ENCODE measurements at regions of chr11 and their contacts with region 1.

Region 1: GRCh38 chr11:82959987-82960778 is 58.6 kb downstream of the DDIAS start:
- DNase-seq: no peak
- H3K4me3 ChIP-seq: no peak overlapping the region
- H3K4me3 Mint-ChIP-seq: no peak overlapping the region
- H3K27ac Mint-ChIP-seq: no peak overlapping the region
- H3K4me1 ChIP-seq: peaks cover 4% of the 10 kb centered on the region; the same call in 1 of the 2 replicates
- H3K4me1 Mint-ChIP-seq: no peaks in the 10 kb centered on the region
- H3K27me3 ChIP-seq: no peaks in the 10 kb centered on the region
- H3K27me3 Mint-ChIP-seq: no peaks in the 10 kb centered on the region
- CTCF ChIP-seq: no peak

Region 2: DNA sequence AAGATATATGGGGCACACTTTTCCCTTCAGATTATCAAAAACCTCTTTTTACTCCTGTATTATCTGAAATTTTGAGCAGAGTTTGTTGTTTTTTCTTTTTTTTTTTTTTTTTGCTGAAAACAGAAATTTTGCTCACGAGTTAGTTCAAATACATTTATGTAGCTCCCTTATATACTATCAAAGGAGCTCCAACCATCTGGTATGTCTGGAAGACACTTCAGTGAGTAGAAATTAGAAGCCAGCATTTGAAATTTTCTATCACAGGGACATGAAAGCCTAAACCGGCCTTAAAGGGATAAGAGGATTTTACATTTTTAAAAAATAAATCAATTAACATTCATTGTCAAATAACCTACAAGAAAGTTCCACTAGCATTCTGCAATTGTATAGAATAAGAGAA is 14.7 kb after region 1 on chr11:
- CTCF ChIA-PET with region 1: no interaction called
- POLR2A ChIA-PET with region 1: interaction called, 10 read pairs
- intact Hi-C with region 1: no loop called
- DNase-seq: no peak
- H3K4me3 ChIP-seq: no peak overlapping the region
- H3K4me3 Mint-ChIP-seq: no peak overlapping the region
- H3K27ac Mint-ChIP-seq: no peak overlapping the region
- H3K4me1 ChIP-seq: peaks cover 13% of the 10 kb centered on the region
- H3K4me1 Mint-ChIP-seq: peaks cover 12% of the 10 kb centered on the region
- H3K27me3 ChIP-seq: no peaks in the 10 kb centered on the region
- H3K27me3 Mint-ChIP-seq: no peaks in the 10 kb centered on the region
- CTCF ChIP-seq: no peak